ENCODE measurements at regions of chr2 and their contacts with region 1.

Region 1: DNA sequence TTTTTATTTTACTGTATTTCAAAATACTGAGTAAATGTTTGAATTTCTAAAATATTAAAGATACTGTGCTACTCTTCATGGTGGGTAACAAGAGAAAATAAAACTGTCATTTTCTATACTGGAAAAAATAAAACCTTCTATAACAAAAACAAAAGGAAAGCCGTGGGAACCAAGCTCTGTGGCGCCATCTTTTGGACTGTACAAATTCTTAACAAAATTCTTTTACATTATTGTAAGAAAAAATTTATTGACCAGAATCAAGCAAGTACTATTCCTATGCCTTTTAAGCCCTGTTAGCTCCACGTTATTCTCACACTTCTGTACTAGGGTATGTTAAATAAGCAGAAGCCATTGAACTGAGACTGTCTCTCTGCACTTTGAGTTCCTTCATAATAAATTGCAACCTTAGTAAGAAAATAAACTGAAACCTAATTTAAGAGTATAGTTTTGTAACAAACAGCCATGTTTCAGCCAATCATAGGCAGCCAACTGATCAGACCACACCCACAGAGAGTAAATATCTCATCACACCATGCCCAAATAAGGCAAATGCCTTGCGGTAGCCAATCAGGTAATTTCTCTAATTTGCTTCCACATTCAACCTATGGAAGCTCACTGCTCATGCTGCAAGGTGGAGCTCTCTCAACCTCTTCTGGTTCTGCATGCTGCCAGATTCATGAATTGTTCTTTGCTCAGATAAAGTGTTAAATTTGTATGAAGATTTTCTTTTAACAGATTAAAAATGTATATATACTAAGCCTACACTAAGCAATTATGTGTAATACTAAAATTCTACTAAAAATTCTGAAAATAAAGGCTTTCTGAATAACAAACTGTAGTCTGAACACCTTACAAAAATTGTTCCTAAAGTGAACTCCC is 42.2 kb downstream of the HIBCH start:
- DNase-seq: peak; percentile 48
- H3K4me3 ChIP-seq: no peak overlapping the region
- H3K27ac ChIP-seq: no peak overlapping the region
- H3K4me1 ChIP-seq: peaks cover 25% of the 10 kb centered on the region
- H3K27me3 ChIP-seq: no peaks in the 10 kb centered on the region
- CTCF ChIP-seq: peak; percentile 36 to 56

Region 2: DNA sequence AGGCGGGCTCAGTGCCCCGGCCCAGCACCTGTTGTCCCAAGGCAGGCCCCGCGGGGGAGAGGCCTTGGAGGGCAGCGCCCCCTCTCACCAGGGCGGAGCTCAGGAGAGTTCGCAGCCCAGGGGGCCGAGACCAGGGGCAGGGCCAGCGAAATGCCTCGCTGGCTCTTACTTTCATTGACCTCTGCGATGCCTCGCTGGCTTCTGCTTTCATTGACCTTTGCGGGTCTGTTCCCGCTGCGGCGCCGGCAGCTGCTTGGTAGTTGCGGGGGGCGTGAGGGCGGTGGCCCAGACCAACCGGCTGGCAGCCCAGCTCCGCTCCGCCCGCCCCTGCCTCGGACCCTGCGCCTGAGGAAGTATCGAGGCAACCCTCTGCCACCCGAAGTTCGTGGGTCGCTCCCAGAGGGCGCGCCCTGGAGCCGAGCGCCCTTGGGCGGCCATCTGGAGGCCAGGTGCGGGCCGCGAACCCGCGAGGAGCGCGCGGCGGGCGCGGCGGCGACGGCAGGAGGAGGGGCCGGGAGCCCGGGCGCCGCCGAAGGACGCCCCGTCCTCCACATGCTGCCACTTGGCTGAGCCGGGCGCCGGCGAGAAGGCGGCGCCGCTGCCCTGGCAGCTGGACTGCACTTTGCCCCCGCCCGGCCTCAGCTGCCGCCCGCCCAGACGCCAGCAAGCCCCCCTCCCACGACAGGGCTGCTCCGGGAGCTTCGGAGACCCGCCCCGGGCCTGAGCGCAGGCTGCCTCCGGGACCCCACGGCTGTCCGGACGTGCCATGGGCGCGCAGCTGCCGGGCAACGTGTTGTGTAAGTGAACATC is 97.0 kb before region 1 on chr2:
- CTCF ChIA-PET with region 1: no interaction called
- dilution Hi-C with region 1: no loop called
- in situ Hi-C with region 1: no loop called
- intact Hi-C with region 1: no loop called
- DNase-seq: no peak
- H3K4me3 ChIP-seq: peak overlapping the region; percentile 28 to 58 (median 53)
- H3K27ac ChIP-seq: no peak overlapping the region
- H3K4me1 ChIP-seq: peaks cover 7% of the 10 kb centered on the region
- H3K27me3 ChIP-seq: no peaks in the 10 kb centered on the region
- CTCF ChIP-seq: peak; percentile 15 to 39

Region 3: GRCh38 chr2:190319555-190320498 is 42.4 kb after region 1 on chr2 and contains the start of gene HIBCH:
- CTCF ChIA-PET with region 1: interaction called, 3 read pairs
- dilution Hi-C with region 1: no loop called
- in situ Hi-C with region 1: no loop called
- intact Hi-C with region 1: loop called (anchors 2 kb)
- DNase-seq: peak; percentile 100
- H3K4me3 ChIP-seq: peak within 1 kb of the TSS; percentile 66 to 77 (median 75)
- H3K27ac ChIP-seq: peak within 1 kb of the TSS; percentile 37
- H3K4me1 ChIP-seq: peaks cover 3% of the 10 kb centered on the region
- H3K27me3 ChIP-seq: no peaks in the 10 kb centered on the region
- CTCF ChIP-seq: peak; percentile 84 to 90
- total RNA-seq, gene HIBCH: 17.0 to 20.5 TPM

Region 4: DNA sequence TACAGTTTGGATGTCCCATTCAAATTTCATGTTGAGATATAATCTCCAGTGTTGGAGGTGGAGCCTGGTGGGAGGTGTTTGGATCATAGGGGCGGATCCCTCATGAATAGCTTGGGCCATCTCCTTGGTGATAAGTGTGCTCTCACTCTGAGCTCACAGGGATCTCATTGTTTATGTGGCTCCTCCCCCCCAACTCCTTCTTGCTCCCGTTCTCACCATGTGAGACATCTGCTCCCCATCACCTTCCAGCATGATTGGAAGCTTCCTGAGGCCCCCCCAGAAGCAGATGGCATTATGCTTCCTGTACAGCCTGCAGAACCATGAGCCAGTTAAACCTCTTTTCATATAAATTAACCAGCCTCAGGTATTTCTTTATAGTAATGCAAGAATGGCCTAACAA is 62.9 kb after region 1 on chr2:
- CTCF ChIA-PET with region 1: no interaction called
- dilution Hi-C with region 1: no loop called
- in situ Hi-C with region 1: no loop called
- intact Hi-C with region 1: no loop called
- DNase-seq: peak; percentile 69
- H3K4me3 ChIP-seq: no peak overlapping the region
- H3K27ac ChIP-seq: no peak overlapping the region
- H3K4me1 ChIP-seq: peaks cover 9% of the 10 kb centered on the region
- H3K27me3 ChIP-seq: no peaks in the 10 kb centered on the region
- CTCF ChIP-seq: no peak